ENCODE measurements at regions of chrX and their contacts with region 1.

Region 1: GRCh38 chrX:107716816-107717700 is 58.5 kb downstream of the TSC22D3 start:
- DNase-seq: peak; percentile 73
- ATAC-seq: peak; percentile 56
- H3K4me3 Mint-ChIP-seq: peak overlapping the region; percentile 94
- H3K27ac Mint-ChIP-seq: peak overlapping the region; percentile 99
- H3K4me1 Mint-ChIP-seq: peaks cover 81% of the 10 kb centered on the region
- H3K27me3 Mint-ChIP-seq: no peaks in the 10 kb centered on the region
- CTCF ChIP-seq: no peak

Region 2: GRCh38 chrX:106415276-106415895 is 1301.7 kb before region 1 on chrX:
- CTCF ChIA-PET with region 1: no interaction called
- POLR2A ChIA-PET with region 1: no interaction called
- intact Hi-C with region 1: no loop called
- DNase-seq: no peak
- ATAC-seq: peak; percentile 18
- H3K4me3 Mint-ChIP-seq: no peak overlapping the region
- H3K27ac Mint-ChIP-seq: no peak overlapping the region
- H3K4me1 Mint-ChIP-seq: no peaks in the 10 kb centered on the region
- H3K27me3 Mint-ChIP-seq: no peaks in the 10 kb centered on the region
- CTCF ChIP-seq: peak; percentile 37

Region 3: DNA sequence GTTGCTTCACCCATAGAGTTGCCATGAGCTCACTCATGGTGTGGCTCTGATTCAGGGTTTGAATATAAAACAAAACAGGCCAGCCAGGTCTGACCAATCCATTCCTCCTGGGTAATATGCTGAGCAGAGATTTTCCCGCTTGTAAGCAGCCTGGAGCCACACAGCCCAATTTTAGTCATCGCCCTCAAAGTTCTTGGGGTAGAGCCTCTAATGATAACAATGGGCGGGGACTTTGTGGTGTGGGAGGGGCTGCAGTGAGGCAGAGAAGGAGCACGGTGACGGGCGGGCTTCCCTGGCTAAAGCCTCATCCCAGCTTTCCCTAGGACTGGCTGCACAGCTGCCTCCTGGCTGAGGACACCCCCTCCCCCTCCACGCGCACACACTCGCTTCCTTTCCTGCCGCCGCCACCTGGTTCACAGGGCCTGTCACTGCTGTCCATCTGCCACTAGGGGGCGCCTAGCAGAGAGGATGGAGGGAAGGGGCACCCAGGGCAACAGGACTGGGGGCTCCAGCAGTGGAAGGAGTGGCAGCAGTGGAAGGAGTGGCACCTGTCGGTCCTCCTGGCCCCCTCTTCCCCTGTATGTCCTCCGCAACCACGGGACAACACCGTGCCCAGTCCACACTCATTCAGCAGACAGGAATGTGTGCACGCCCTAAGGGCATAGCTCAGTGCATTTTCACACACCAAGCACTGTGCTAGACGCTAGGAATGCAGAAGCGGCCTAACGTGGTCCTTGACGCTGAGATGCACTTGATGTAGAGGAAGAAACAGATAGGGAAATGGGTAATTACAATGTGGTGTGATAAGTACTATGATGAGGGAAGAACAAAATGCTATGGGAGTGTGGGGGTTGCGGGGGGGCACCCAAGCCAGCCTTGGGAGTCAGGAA is 61.9 kb before region 1 on chrX:
- CTCF ChIA-PET with region 1: interaction called, 36 read pairs
- POLR2A ChIA-PET with region 1: interaction called, 9 read pairs
- intact Hi-C with region 1: loop called (anchors 1 kb)
- DNase-seq: peak; percentile 40
- ATAC-seq: peak; percentile 86
- H3K4me3 Mint-ChIP-seq: no peak overlapping the region
- H3K27ac Mint-ChIP-seq: no peak overlapping the region
- H3K4me1 Mint-ChIP-seq: peaks cover 10% of the 10 kb centered on the region
- H3K27me3 Mint-ChIP-seq: no peaks in the 10 kb centered on the region
- CTCF ChIP-seq: no peak

Region 4: DNA sequence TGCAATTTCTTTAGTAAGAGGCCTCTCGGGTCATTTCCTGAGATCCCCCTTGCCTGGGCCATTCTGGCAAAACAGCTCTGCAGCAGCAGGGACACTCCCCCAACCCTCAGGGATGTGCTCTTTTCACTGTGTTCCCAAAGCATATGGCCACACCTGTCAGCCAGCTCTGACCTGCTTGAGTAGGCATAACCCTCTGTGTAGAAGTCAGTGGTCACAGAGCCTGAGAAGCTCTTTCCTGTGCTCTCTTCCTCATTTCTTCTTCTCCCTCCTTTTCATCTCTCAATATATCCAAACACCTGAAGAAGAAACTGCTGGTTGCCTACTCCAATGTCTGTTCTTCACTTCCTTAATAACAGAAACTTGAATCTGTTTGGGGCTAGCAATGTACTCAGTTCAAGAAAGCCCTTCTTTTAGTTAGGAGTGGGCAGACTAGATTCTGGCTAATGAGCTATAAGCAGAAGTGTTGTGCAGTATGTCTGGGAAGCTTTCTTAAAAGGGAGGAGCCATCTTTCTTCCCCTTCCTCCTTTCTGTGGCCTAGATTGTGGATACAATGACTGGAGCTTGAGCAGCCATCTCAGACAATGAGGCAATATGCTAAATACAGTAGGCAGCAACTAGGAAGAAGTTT is 15.5 kb before region 1 on chrX:
- CTCF ChIA-PET with region 1: no interaction called
- POLR2A ChIA-PET with region 1: interaction called, 13 read pairs
- intact Hi-C with region 1: no loop called
- DNase-seq: no peak
- ATAC-seq: peak; percentile 75
- H3K4me3 Mint-ChIP-seq: no peak overlapping the region
- H3K27ac Mint-ChIP-seq: peak overlapping the region; percentile 76
- H3K4me1 Mint-ChIP-seq: peaks cover 33% of the 10 kb centered on the region
- H3K27me3 Mint-ChIP-seq: no peaks in the 10 kb centered on the region
- CTCF ChIP-seq: no peak

Region 5: GRCh38 chrX:107741404-107741790 is 24.3 kb after region 1 on chrX:
- CTCF ChIA-PET with region 1: no interaction called
- POLR2A ChIA-PET with region 1: interaction called, 20 read pairs
- intact Hi-C with region 1: loop called (anchors 1 kb)
- DNase-seq: peak; percentile 14
- ATAC-seq: peak; percentile 12
- H3K4me3 Mint-ChIP-seq: peak overlapping the region; percentile 89
- H3K27ac Mint-ChIP-seq: peak overlapping the region; percentile 98
- H3K4me1 Mint-ChIP-seq: peaks cover 20% of the 10 kb centered on the region
- H3K27me3 Mint-ChIP-seq: no peaks in the 10 kb centered on the region
- CTCF ChIP-seq: no peak